Naive thymus-derived CD8-positive, alpha-beta T cell (primary cell): ENCODE measurements at regions of chr12 and their contacts with region 1.

Region 1: DNA sequence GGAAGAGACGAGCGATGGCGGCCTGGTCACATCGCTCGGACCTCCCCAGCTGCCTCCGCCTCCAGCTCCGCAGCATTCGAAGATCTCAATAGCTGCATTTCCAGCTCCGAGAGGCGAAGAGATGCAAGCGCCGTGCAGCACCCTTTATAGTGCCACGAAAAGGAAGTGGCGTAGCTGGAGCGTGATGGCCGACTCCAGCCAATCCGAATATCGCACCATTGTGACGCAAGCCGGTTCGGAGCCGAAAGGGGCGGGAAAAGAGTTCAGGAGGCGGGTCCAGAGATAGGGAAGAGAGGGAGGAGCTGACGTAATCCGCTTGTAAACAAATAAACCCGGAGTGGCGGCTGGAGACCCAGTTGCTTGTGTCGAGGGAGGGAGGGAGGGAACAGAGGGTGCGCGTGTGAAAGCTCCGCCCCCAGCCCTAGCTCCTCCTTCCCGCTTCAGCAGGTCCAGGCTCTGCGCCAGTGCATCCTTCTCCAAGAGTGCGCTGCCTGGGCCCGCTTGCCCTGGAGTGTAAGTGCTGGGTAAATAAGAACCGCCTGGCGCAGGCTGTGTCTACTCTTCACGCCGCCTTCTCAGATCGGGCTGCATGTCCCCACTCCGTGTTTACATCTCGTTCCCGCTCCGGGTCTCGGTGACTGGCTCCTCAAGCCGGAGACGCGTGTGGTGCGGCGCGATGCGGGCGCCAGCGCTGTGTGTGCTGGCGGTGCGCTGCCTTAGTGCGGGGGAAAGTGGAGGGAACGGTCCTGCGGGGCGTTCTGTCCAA is at the start of gene BTG1:
- DNase-seq: peak; percentile 87 to 100 (median 100)
- ATAC-seq: peak; percentile 68 to 72
- H3K4me3 Mint-ChIP-seq: peak within 1 kb of the TSS; percentile 89 to 100 (median 100)
- H3K27ac Mint-ChIP-seq: peak within 1 kb of the TSS; percentile 91 to 100 (median 99)
- H3K4me1 Mint-ChIP-seq: peaks cover 20 to 38% (median 30%) of the 10 kb centered on the region in 4 donors
- H3K27me3 Mint-ChIP-seq: peaks cover 0 to 4% (median 0%) of the 10 kb centered on the region in 5 donors
- polyA plus RNA-seq, gene BTG1: 705 to 889 (median 719) TPM

Region 2: GRCh38 chr12:91663310-91663709 is 482.6 kb before region 1 on chr12:
- POLR2A ChIA-PET with region 1: no interaction called
- DNase-seq: no peak
- ATAC-seq: no peak
- H3K4me3 Mint-ChIP-seq: no peak overlapping the region
- H3K27ac Mint-ChIP-seq: no peak overlapping the region
- H3K4me1 Mint-ChIP-seq: peaks cover 6 to 17% (median 11%) of the 10 kb centered on the region in 4 donors
- H3K27me3 Mint-ChIP-seq: no peaks in the 10 kb centered on the region

Region 3: GRCh38 chr12:91871751-91872150 is 274.2 kb before region 1 on chr12:
- POLR2A ChIA-PET with region 1: interaction called, 176 read pairs
- DNase-seq: no peak
- ATAC-seq: no peak
- H3K4me3 Mint-ChIP-seq: peak overlapping the region in 8 of 10 donors; percentile 1 to 69 (median 44)
- H3K27ac Mint-ChIP-seq: peak overlapping the region; percentile 63 to 96 (median 91)
- H3K4me1 Mint-ChIP-seq: peaks cover 38 to 71% (median 61%) of the 10 kb centered on the region in 4 donors
- H3K27me3 Mint-ChIP-seq: no peaks in the 10 kb centered on the region

Region 4: DNA sequence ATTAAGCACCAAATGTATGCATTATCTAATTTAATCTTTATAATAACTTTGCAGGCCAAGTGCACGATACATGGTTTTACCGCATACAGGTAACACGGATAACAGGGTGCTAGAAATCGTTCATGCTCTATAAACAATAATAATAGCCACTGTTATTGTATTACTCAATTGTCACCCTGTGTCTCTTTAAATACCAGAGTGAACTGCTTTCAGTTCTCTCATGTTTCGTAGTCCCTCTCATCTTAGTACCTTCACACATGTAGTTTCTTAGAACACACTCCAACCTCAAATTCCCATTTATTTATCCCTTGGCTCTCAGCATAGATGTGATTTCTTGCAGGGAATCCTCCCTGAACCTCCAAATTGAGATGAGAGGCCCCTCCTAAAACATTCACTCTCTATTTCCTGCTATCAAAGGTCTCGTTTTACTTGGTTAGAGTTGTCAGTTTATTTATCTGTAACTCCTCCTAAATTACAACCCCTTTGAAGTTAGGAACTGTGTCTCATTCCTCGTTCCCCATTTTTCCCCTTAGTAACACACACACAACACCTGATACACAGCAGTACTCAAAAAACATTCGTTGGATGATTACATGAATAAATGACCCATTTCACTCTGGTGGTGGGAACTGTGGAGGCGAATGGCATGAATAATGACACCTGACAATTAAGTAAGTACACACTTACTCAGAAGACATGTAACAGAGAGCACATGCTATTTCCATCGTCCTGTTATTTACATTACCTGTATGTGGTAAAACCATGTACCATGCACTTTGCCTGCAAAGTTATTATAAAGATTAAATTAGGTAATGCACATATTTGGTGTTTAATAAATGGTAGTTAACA is 134.8 kb before region 1 on chr12:
- POLR2A ChIA-PET with region 1: interaction called, 15 read pairs
- DNase-seq: peak in 1 of 10 donors; percentile 20
- ATAC-seq: peak; percentile 56 to 59
- H3K4me3 Mint-ChIP-seq: peak overlapping the region; percentile 54 to 87 (median 81)
- H3K27ac Mint-ChIP-seq: peak overlapping the region; percentile 83 to 94 (median 91)
- H3K4me1 Mint-ChIP-seq: peaks cover 30 to 62% (median 52%) of the 10 kb centered on the region in 4 donors
- H3K27me3 Mint-ChIP-seq: no peaks in the 10 kb centered on the region

Region 5: GRCh38 chr12:92114834-92115233 is 31.1 kb before region 1 on chr12:
- POLR2A ChIA-PET with region 1: interaction called, 21 read pairs
- DNase-seq: no peak
- ATAC-seq: peak; percentile 11 to 17
- H3K4me3 Mint-ChIP-seq: peak overlapping the region in 9 of 10 donors; percentile 34 to 74 (median 62)
- H3K27ac Mint-ChIP-seq: peak overlapping the region in 5 of 10 donors; percentile 7 to 72 (median 68)
- H3K4me1 Mint-ChIP-seq: peaks cover 33 to 66% (median 61%) of the 10 kb centered on the region in 4 donors
- H3K27me3 Mint-ChIP-seq: no peaks in the 10 kb centered on the region

Region 6: DNA sequence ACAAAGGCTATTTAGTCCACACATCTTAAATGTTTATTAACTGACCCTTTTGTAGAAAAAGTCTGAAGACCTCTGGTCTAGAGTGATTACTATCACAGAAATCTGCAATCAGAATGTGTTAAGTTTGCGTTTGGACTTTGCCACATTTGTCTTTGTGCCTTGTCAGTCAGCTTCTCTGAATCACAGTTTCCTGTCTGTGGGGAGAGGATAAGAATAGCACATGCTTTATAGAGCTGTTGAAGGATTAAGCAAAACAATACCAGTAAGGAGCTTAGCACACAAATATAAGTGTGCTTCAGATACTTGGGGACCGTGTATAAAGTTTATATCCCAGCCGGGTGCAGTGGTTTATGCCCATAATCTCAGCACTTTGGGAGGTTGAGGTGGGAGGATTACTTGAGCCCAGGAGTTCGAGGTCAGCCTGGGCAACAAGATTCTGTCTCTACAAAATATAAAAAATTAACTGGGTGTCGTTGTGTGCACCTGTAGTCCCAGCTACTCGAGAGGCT is 62.8 kb after region 1 on chr12:
- POLR2A ChIA-PET with region 1: interaction called, 189 read pairs
- DNase-seq: peak in 6 of 10 donors; percentile 7 to 68 (median 46)
- ATAC-seq: peak; percentile 87 to 88
- H3K4me3 Mint-ChIP-seq: peak overlapping the region; percentile 45 to 87 (median 76)
- H3K27ac Mint-ChIP-seq: peak overlapping the region; percentile 85 to 98 (median 92)
- H3K4me1 Mint-ChIP-seq: peaks cover 23 to 49% (median 40%) of the 10 kb centered on the region in 4 donors
- H3K27me3 Mint-ChIP-seq: no peaks in the 10 kb centered on the region

Region 7: DNA sequence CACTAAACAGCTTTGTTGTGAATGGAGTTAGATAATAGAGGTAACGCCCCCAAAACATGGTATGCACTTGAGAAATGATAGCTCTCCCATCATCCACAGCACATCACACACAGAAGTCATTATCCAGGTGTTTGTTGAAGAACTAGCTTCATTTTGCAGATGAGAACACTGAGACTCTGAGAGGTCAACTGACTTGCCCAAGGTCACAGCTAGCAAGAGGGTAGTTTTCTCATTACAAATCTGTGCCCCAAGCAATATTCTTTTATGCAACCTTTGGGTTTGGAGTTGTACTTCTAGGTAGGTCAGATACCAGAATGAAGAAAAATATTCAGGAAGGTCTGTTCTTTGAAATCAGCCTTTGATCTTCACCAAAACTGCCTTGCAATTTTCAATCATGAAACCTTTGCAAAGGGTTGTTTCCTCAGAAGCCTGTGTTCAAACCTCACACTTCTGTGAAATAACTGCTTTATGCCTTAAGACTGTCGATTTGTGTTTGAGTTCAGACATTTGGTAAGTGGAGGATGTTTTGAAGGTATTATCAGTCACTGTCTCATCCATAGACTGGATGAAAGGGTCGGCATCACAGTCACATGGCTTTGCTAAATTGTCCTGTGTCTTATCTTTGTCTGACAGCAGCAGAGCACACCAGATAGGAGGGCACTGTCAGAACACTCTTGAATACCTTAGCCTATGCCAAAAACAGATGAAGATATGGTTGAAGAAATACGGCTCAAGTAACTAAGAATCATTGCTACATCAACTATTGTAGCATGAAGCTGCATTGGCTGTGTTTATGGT is 233.0 kb after region 1 on chr12:
- POLR2A ChIA-PET with region 1: interaction called, 17 read pairs
- DNase-seq: peak in 5 of 10 donors; percentile 7 to 65 (median 38)
- ATAC-seq: peak; percentile 89 to 92
- H3K4me3 Mint-ChIP-seq: peak overlapping the region in 9 of 10 donors; percentile 7 to 73 (median 45)
- H3K27ac Mint-ChIP-seq: peak overlapping the region; percentile 80 to 98 (median 92)
- H3K4me1 Mint-ChIP-seq: peaks cover 37 to 71% (median 62%) of the 10 kb centered on the region in 4 donors
- H3K27me3 Mint-ChIP-seq: no peaks in the 10 kb centered on the region

Region 8: GRCh38 chr12:92593734-92594402 is 448.0 kb after region 1 on chr12:
- POLR2A ChIA-PET with region 1: interaction called, 11 read pairs
- DNase-seq: peak; percentile 53 to 93 (median 84)
- ATAC-seq: peak; percentile 90 to 92
- H3K4me3 Mint-ChIP-seq: peak overlapping the region; percentile 19 to 89 (median 64)
- H3K27ac Mint-ChIP-seq: peak overlapping the region; percentile 96 to 100 (median 99)
- H3K4me1 Mint-ChIP-seq: peaks cover 19 to 63% (median 31%) of the 10 kb centered on the region in 4 donors
- H3K27me3 Mint-ChIP-seq: no peaks in the 10 kb centered on the region